Panc1 (cell line): ENCODE measurements at regions of chr6 and their contacts with region 1.

Region 1: GRCh38 chr6:68778356-68779020 is 143.4 kb downstream of the ADGRB3 start:
- DNase-seq: peak; percentile 24
- ATAC-seq: peak; percentile 71
- H3K4me3 ChIP-seq: no peak overlapping the region
- H3K27ac ChIP-seq: no peak overlapping the region
- H3K4me1 ChIP-seq: no peaks in the 10 kb centered on the region
- H3K27me3 ChIP-seq: no peaks in the 10 kb centered on the region
- CTCF ChIP-seq: peak; percentile 74

Region 2: DNA sequence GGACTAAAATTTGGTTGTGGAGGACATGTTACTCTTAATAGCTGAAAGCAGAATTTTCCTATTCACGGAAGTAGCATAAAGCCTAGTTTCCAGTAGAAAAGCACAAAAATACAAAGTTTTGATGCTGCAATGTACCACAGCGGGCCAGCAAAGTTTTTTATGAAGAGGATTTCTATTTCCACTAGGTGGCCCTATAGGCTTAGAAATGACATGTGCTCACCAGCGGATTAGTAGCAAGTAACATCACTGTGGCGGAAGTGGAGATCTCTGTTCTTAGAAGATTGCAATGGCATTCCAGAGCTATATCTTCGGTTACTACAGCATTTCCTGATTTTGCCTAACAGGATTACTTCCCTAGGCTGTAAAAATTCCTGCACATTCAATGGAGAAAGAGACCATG is 1852.4 kb before region 1 on chr6:
- CTCF ChIA-PET with region 1: no interaction called
- POLR2A ChIA-PET with region 1: no interaction called
- in situ Hi-C with region 1: no loop called
- intact Hi-C with region 1: loop called (anchors 5 kb)
- DNase-seq: peak; percentile 24
- ATAC-seq: peak; percentile 92
- H3K4me3 ChIP-seq: no peak overlapping the region
- H3K27ac ChIP-seq: no peak overlapping the region
- H3K4me1 ChIP-seq: no peaks in the 10 kb centered on the region
- H3K27me3 ChIP-seq: no peaks in the 10 kb centered on the region
- CTCF ChIP-seq: peak; percentile 56

Region 3: DNA sequence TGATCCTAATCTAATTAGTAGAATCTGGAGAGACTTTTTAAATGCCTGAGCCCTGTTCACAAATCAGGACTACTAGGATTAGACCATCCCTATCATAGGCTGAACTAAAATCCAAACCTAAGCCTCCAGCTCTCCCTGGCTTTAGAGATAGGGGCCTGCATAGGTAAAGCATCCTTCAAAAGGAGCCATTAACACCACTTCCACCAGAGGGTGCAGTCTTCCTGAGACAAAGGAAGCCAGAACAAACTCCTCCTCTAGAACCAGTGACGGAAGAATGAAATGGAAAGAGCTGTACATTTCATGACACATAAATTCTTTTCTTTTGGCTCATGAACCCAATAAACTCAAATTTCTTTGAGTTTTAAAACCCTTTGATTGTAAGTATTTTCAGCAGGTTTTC is 434.6 kb before region 1 on chr6:
- CTCF ChIA-PET with region 1: no interaction called
- POLR2A ChIA-PET with region 1: no interaction called
- in situ Hi-C with region 1: no loop called
- intact Hi-C with region 1: loop called (anchors 5 kb)
- DNase-seq: peak; percentile 22
- ATAC-seq: peak; percentile 81
- H3K4me3 ChIP-seq: no peak overlapping the region
- H3K27ac ChIP-seq: no peak overlapping the region
- H3K4me1 ChIP-seq: no peaks in the 10 kb centered on the region
- H3K27me3 ChIP-seq: no peaks in the 10 kb centered on the region
- CTCF ChIP-seq: peak; percentile 73

Region 4: GRCh38 chr6:68634726-68635411 is 143.6 kb before region 1 on chr6 and contains the start of gene ADGRB3:
- CTCF ChIA-PET with region 1: no interaction called
- POLR2A ChIA-PET with region 1: no interaction called
- in situ Hi-C with region 1: no loop called
- intact Hi-C with region 1: loop called (anchors 1 kb)
- DNase-seq: no peak
- ATAC-seq: peak; percentile 86
- H3K4me3 ChIP-seq: peak within 1 kb of the TSS; percentile 49 to 55
- H3K27ac ChIP-seq: no peak within 1 kb of the TSS
- H3K4me1 ChIP-seq: peaks cover 20% of the 10 kb centered on the region
- H3K27me3 ChIP-seq: peaks cover 36% of the 10 kb centered on the region
- CTCF ChIP-seq: peak; percentile 25; the same call in 1 of the 2 replicates
- total RNA-seq, gene ADGRB3: 0.10 TPM

Region 5: DNA sequence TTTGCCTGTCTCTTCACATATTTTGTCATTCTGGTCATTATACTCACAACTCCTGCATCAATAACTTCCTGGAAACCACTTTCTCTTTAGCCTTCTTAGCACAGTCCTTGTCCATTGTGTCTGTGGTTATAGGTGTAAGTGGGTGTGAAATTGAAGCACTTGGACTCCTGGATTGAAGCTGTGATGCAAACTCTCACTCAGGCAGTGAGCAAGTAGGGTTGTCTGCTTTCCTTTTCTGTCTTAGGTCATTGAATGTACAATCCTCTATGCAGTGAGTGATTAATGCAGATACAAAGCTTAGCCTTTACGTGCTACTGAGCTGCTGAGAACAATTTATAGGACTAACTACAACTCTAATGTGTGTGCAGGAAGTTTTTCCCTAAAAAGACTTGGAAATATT is 88.6 kb before region 1 on chr6:
- CTCF ChIA-PET with region 1: no interaction called
- POLR2A ChIA-PET with region 1: no interaction called
- in situ Hi-C with region 1: no loop called
- intact Hi-C with region 1: no loop called
- DNase-seq: no peak
- ATAC-seq: no peak
- H3K4me3 ChIP-seq: no peak overlapping the region
- H3K27ac ChIP-seq: no peak overlapping the region
- H3K4me1 ChIP-seq: no peaks in the 10 kb centered on the region
- H3K27me3 ChIP-seq: no peaks in the 10 kb centered on the region
- CTCF ChIP-seq: no peak

Region 6: DNA sequence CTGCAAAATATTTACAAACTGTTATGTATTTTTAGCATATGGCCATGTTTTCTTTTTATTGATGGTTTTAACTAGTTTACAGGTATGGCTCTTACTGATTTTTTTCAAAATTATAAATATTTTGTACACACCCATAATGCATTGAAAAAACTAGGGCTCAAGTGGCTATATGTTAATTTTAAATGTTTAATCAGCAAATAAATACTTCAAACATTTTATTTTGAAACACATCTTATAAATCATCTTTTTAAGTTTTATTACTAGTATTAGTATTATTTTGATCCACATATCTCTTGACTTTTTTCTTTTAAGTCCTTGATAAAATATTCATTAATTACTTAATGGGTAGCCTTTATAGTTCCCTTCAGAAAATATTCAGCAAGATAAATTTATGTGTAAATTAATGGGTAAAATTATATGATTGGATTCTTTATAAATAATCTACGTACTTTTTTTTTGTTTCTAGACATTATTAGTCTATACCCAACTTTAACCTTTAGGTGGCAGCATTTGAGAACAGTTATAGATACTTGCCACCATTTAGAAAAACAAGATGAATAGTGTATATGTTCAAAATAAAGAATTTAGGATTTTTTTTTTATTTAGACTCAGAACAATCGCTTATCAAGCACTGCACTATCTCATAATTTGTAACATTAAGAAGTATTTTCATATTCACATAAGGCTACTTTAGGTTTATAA is 98.5 kb after region 1 on chr6:
- CTCF ChIA-PET with region 1: interaction called, 11 read pairs
- POLR2A ChIA-PET with region 1: no interaction called
- in situ Hi-C with region 1: no loop called
- intact Hi-C with region 1: no loop called
- DNase-seq: no peak
- ATAC-seq: no peak
- H3K4me3 ChIP-seq: no peak overlapping the region
- H3K27ac ChIP-seq: no peak overlapping the region
- H3K4me1 ChIP-seq: no peaks in the 10 kb centered on the region
- H3K27me3 ChIP-seq: no peaks in the 10 kb centered on the region; the same call in 1 of the 2 replicates
- CTCF ChIP-seq: peak; percentile 22; the same call in 1 of the 2 replicates